Activated naive CD4-positive, alpha-beta T cell treated with anti-CD3 and anti-CD28 coated beads for 36 hours (primary cell): ENCODE measurements at regions of chr2 and their contacts with region 1.

Region 1: GRCh38 chr2:96208143-96209010 is at the start of gene STARD7:
- DNase-seq: peak; percentile 98
- H3K4me3 Mint-ChIP-seq: peak within 1 kb of the TSS; percentile 92
- H3K27ac Mint-ChIP-seq: peak within 1 kb of the TSS; percentile 88
- H3K4me1 Mint-ChIP-seq: peaks cover 48% of the 10 kb centered on the region
- H3K27me3 Mint-ChIP-seq: no peaks in the 10 kb centered on the region
- total RNA-seq, gene STARD7: 84.7 to 87.6 TPM

Region 2: DNA sequence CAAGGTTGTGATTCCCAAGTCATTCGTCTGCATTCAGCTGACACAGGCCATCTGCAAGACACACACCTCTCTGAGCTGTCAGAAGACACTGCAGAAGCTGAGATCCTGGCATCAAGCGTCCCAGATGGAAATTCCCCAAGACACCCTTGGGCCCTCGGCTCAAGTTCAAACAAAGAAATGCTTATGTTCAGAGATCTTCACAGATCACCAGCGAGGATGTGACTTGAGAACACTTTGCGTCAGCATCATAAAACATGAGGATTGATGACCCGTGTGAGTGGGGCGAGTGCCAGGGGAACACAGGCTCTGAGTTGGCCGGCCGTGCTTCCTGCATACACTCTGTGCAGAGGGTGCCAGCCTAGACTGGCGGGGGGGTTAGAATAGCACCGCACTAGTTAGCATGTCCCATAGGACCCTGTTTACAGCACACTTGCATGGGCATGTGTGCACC is 874.5 kb before region 1 on chr2:
- CTCF ChIA-PET with region 1: no interaction called
- intact Hi-C with region 1: no loop called
- DNase-seq: no peak
- H3K4me3 Mint-ChIP-seq: no peak overlapping the region
- H3K27ac Mint-ChIP-seq: no peak overlapping the region
- H3K4me1 Mint-ChIP-seq: no peaks in the 10 kb centered on the region
- H3K27me3 Mint-ChIP-seq: no peaks in the 10 kb centered on the region

Region 3: DNA sequence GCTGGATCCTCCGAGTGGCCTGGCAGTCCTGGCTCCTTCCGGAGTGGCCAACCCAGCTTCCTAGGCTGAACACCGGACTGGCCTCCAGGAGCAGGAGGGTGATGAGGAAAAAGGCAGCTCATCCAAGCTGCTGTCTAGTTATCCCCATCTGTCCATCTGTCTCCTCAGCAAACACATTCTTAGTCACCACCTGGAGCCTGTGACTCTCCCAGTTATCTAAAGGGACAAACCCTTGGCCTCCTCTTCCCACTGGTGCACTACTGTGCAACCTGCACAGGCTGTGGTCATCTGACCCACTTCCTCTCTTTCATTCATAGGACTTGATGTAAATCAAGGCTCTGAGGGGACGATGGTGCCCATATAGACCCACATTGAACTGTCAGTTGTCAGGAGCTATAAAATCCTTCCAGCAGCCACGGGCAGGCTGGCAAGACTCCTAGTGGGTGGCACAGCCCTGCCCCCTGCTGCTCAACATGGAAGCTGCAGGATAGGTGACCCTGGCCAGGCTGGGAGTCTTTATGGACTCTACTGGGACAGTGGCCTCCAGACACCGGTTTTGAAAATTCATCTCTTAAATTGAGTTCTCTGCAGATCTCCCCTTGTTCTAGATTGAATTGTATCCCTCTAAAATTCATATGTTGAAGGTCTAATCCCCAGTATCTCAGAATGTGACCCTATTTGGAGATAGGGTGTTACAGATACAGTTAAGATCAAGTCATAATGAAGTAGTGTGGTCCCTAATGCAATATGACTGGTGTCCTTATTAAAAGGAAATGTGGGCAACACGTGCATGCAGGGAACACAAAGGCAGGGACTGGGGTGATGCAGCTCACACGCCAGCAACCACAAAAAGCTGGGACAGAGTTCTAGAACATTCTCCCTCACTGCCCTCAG is 33.9 kb before region 1 on chr2:
- CTCF ChIA-PET with region 1: interaction called, 20 read pairs
- intact Hi-C with region 1: no loop called
- DNase-seq: peak; percentile 92
- H3K4me3 Mint-ChIP-seq: no peak overlapping the region
- H3K27ac Mint-ChIP-seq: peak overlapping the region; percentile 52
- H3K4me1 Mint-ChIP-seq: peaks cover 17% of the 10 kb centered on the region
- H3K27me3 Mint-ChIP-seq: no peaks in the 10 kb centered on the region

Region 4: DNA sequence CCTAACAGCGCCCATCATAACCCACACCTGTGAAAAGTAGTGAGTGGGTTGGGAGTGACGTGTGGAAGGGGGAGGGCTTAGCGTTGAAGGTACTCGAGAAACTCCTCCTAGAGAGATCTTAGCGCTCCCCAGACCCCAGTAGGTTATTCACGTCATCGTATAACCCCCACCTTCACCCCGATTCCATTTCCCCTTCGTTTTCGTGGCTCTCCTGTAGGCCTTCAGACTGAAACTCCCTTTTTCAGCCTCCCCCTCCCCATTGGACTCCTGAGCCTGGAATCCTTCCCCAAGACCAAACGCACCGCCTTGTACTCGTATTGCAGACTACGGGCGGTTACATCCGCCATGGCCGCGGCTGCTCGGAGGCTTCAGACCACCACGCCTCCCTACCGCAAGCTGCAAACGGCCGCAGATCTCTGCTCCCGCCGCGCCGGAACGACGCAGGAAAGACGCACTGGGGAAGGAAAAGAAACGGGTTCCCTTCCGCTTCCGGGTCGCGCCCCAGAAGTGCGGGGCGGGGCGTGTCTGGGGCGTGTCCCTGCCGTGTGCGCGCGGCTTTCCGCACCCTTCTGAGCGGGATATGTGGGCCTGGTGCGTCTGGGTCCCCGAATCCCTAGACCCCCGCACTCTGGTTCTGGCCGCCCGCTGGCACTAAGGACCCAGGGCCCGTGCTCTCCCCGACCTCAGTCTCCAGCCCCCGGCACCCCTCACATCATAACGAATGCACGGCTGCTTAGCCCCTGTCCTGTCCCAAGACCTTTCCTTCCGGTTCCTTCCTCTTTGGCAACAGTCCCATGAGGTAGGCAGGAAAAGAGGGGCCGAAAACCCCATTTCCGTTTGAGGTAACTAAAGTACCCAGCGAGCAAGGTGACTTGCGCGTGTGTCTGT is 97.0 kb after region 1 on chr2 and contains the start of gene SNRNP200:
- CTCF ChIA-PET with region 1: no interaction called
- intact Hi-C with region 1: loop called (anchors 1 kb)
- DNase-seq: peak; percentile 92
- H3K4me3 Mint-ChIP-seq: peak within 1 kb of the TSS; percentile 100
- H3K27ac Mint-ChIP-seq: peak within 1 kb of the TSS; percentile 98
- H3K4me1 Mint-ChIP-seq: peaks cover 49% of the 10 kb centered on the region
- H3K27me3 Mint-ChIP-seq: no peaks in the 10 kb centered on the region
- total RNA-seq, gene SNRNP200: 179 to 181 TPM

Region 5: GRCh38 chr2:96330407-96330806 is 122.0 kb after region 1 on chr2:
- CTCF ChIA-PET with region 1: no interaction called
- intact Hi-C with region 1: loop called (anchors 1 kb)
- DNase-seq: no peak
- H3K4me3 Mint-ChIP-seq: no peak overlapping the region
- H3K27ac Mint-ChIP-seq: peak overlapping the region; percentile 13
- H3K4me1 Mint-ChIP-seq: peaks cover 47% of the 10 kb centered on the region
- H3K27me3 Mint-ChIP-seq: no peaks in the 10 kb centered on the region

Region 6: DNA sequence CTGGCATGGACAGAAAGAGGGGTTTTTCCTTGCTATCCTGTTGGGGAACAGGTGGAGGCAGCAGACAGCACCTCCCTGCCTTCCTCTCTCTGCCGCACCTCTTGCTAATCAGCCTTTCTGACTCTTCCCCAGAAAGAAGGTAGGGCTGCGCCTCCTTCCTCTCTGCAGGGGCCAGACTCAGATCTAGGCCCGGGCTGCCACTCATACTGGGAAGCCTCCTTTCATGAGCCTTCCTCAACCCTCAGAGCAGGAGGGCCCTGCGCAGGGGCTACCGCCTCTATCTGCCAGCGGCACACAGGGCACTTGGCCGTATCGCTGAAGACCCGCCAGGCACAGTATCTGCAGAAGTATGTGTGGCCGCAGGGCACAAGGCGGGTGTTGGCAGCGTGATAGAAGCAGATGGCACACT is 289.6 kb after region 1 on chr2:
- CTCF ChIA-PET with region 1: no interaction called
- intact Hi-C with region 1: no loop called
- DNase-seq: no peak
- H3K4me3 Mint-ChIP-seq: no peak overlapping the region
- H3K27ac Mint-ChIP-seq: no peak overlapping the region
- H3K4me1 Mint-ChIP-seq: peaks cover 31% of the 10 kb centered on the region
- H3K27me3 Mint-ChIP-seq: no peaks in the 10 kb centered on the region